ENCODE measurements at regions of chr2 and their contacts with region 1.

Region 1: GRCh38 chr2:138787053-138787666 is 7.0 kb upstream of the NXPH2 start:
- DNase-seq: no peak
- H3K4me3 ChIP-seq: no peak overlapping the region
- H3K27ac ChIP-seq: no peak overlapping the region
- H3K4me1 ChIP-seq: peaks cover 0 to under 1% (median 0%) of the 10 kb centered on the region in 4 experiments; a peak in 1 of 7 replicates
- H3K27me3 ChIP-seq: peaks cover 0 to 3% (median 0%) of the 10 kb centered on the region in 4 experiments; a peak in 1 of 7 replicates
- CTCF ChIP-seq: peak in 2 of 3 experiments; percentile 50 to 59; a peak in 2 of 4 replicates
- EP300 ChIP-seq: no peak
- POLR2A ChIP-seq: no peak
- RAD21 ChIP-seq: peak; percentile 78 to 81

Region 2: GRCh38 chr2:137888845-137889244 is 898.3 kb before region 1 on chr2:
- CTCF ChIA-PET with region 1: interaction called, 20 read pairs
- POLR2A ChIA-PET with region 1: no interaction called
- DNase-seq: peak; percentile 13 to 62
- H3K4me3 ChIP-seq: no peak overlapping the region
- H3K27ac ChIP-seq: no peak overlapping the region
- H3K4me1 ChIP-seq: peaks cover 0 to 3% (median 1%) of the 10 kb centered on the region in 4 experiments; a peak in 2 of 7 replicates
- H3K27me3 ChIP-seq: no peaks in the 10 kb centered on the region
- CTCF ChIP-seq: peak; percentile 60 to 79 (median 65)
- EP300 ChIP-seq: no peak
- POLR2A ChIP-seq: no peak
- RAD21 ChIP-seq: peak; percentile 75 to 76

Region 3: GRCh38 chr2:138507267-138507666 is 279.9 kb before region 1 on chr2:
- CTCF ChIA-PET with region 1: no interaction called
- POLR2A ChIA-PET with region 1: no interaction called
- DNase-seq: no peak
- H3K4me3 ChIP-seq: no peak overlapping the region
- H3K27ac ChIP-seq: no peak overlapping the region
- H3K4me1 ChIP-seq: peaks cover 0 to 7% (median 2%) of the 10 kb centered on the region in 4 experiments; a peak in 4 of 7 replicates
- H3K27me3 ChIP-seq: no peaks in the 10 kb centered on the region
- CTCF ChIP-seq: no peak
- EP300 ChIP-seq: no peak
- POLR2A ChIP-seq: no peak
- RAD21 ChIP-seq: no peak

Region 4: GRCh38 chr2:138615257-138615656 is 171.9 kb before region 1 on chr2:
- CTCF ChIA-PET with region 1: interaction called, 12 read pairs
- POLR2A ChIA-PET with region 1: no interaction called
- DNase-seq: no peak
- H3K4me3 ChIP-seq: no peak overlapping the region
- H3K27ac ChIP-seq: no peak overlapping the region
- H3K4me1 ChIP-seq: no peaks in the 10 kb centered on the region
- H3K27me3 ChIP-seq: no peaks in the 10 kb centered on the region
- CTCF ChIP-seq: no peak
- EP300 ChIP-seq: no peak
- POLR2A ChIP-seq: no peak
- RAD21 ChIP-seq: no peak

Region 5: GRCh38 chr2:138689705-138690104 is 97.5 kb before region 1 on chr2:
- CTCF ChIA-PET with region 1: no interaction called
- POLR2A ChIA-PET with region 1: no interaction called
- DNase-seq: no peak
- H3K4me3 ChIP-seq: no peak overlapping the region
- H3K27ac ChIP-seq: no peak overlapping the region
- H3K4me1 ChIP-seq: no peaks in the 10 kb centered on the region
- H3K27me3 ChIP-seq: no peaks in the 10 kb centered on the region
- CTCF ChIP-seq: no peak
- EP300 ChIP-seq: no peak
- POLR2A ChIP-seq: no peak
- RAD21 ChIP-seq: no peak

Region 6: DNA sequence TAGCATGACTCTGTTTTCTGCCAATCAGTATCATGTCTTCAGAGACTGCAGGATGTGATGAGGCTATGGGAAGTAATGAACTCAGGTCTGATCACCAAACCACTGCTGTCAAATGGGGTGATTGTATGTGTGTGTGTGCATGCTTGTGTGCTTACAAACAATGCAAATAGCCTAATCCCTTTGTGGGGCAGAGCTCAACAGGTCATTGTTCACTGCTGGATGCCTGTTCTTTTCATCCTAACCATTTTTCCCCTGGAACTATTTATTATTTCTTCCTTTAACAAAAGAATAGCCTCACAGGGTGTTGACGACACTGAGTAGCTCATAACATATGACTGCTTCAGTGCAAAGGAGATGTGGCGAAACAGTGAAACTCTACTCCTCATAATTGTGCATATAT is 62.8 kb before region 1 on chr2:
- CTCF ChIA-PET with region 1: interaction called, 20 read pairs
- POLR2A ChIA-PET with region 1: no interaction called
- DNase-seq: no peak
- H3K4me3 ChIP-seq: no peak overlapping the region
- H3K27ac ChIP-seq: no peak overlapping the region
- H3K4me1 ChIP-seq: peaks cover 0 to 7% (median 4%) of the 10 kb centered on the region in 4 experiments; a peak in 3 of 7 replicates
- H3K27me3 ChIP-seq: no peaks in the 10 kb centered on the region
- CTCF ChIP-seq: no peak
- EP300 ChIP-seq: no peak
- POLR2A ChIP-seq: no peak
- RAD21 ChIP-seq: no peak

Region 7: DNA sequence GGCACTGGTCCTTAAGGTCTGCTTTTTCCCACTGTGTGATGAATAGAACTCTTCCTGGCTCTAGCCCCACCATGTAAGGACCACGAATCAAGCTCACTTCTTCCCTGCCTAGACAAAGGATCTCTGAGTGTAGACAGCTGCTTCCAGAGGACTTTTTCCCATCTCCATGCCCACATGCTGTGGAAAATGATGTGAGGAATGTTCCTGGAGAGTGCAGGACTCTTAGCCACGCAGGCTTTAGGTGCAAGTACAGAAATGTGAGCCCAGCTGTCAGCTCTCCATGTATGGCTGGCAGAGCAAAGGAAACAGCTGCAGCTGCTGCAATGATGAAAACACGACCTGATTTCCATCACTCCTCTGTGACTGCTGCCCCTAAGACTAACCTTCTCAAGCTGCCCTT is 42.4 kb before region 1 on chr2:
- CTCF ChIA-PET with region 1: interaction called, 12 read pairs
- POLR2A ChIA-PET with region 1: no interaction called
- DNase-seq: no peak
- H3K4me3 ChIP-seq: no peak overlapping the region
- H3K27ac ChIP-seq: no peak overlapping the region
- H3K4me1 ChIP-seq: no peaks in the 10 kb centered on the region
- H3K27me3 ChIP-seq: no peaks in the 10 kb centered on the region
- CTCF ChIP-seq: no peak
- EP300 ChIP-seq: no peak
- POLR2A ChIP-seq: no peak
- RAD21 ChIP-seq: no peak

Region 8: DNA sequence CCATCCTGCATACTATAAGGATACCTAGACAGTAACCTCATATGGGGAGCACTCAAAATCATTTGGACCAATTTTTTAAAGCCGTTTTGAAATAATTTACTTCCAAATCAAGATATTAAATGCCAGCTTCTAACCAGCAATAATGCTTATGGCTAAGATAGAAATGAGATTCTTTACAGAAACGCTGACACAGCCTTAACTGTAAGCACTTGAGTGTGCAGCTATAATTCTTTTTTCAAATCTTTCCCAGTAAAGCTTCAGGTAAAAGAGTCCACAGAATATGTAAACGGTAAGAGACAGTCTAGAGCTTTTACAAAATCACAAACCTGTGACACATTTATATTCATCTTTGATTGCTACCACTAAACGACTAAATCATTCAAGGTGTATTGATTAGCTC is 11.4 kb before region 1 on chr2:
- CTCF ChIA-PET with region 1: interaction called, 11 read pairs
- POLR2A ChIA-PET with region 1: no interaction called
- DNase-seq: no peak
- H3K4me3 ChIP-seq: no peak overlapping the region
- H3K27ac ChIP-seq: no peak overlapping the region
- H3K4me1 ChIP-seq: peaks cover 0 to 12% (median 9%) of the 10 kb centered on the region in 4 experiments; a peak in 4 of 7 replicates
- H3K27me3 ChIP-seq: peaks cover 1 to 21% (median 14%) of the 10 kb centered on the region in 4 experiments; a peak in 6 of 7 replicates
- CTCF ChIP-seq: no peak
- EP300 ChIP-seq: no peak
- POLR2A ChIP-seq: no peak
- RAD21 ChIP-seq: no peak

Region 9: GRCh38 chr2:138827426-138828054 is 40.4 kb after region 1 on chr2:
- CTCF ChIA-PET with region 1: interaction called, 35 read pairs
- POLR2A ChIA-PET with region 1: no interaction called
- DNase-seq: no peak
- H3K4me3 ChIP-seq: no peak overlapping the region
- H3K27ac ChIP-seq: no peak overlapping the region
- H3K4me1 ChIP-seq: no peaks in the 10 kb centered on the region
- H3K27me3 ChIP-seq: no peaks in the 10 kb centered on the region
- CTCF ChIP-seq: peak in 2 of 3 experiments; percentile 56 to 70; a peak in 3 of 4 replicates
- EP300 ChIP-seq: no peak
- POLR2A ChIP-seq: no peak
- RAD21 ChIP-seq: peak; percentile 87 to 91